CD8-positive, alpha-beta T cell (primary cell): ENCODE measurements at regions of chr20 and their contacts with region 1.

Region 1: GRCh38 chr20:35699127-35699975 is at the starts of genes NFS1 and ROMO1:
- DNase-seq: peak; percentile 68 to 93 (median 87)
- ATAC-seq: peak; percentile 88
- H3K4me3 ChIP-seq: peak within 1 kb of the TSS; percentile 94 to 98
- H3K4me3 Mint-ChIP-seq: peak within 1 kb of the TSS; percentile 92
- H3K27ac ChIP-seq: peak within 1 kb of the TSS; percentile 85 to 98
- H3K27ac Mint-ChIP-seq: peak within 1 kb of the TSS; percentile 95
- H3K4me1 ChIP-seq: peaks cover 18% of the 10 kb centered on the region
- H3K4me1 Mint-ChIP-seq: peaks cover 42% of the 10 kb centered on the region
- H3K27me3 ChIP-seq: no peaks in the 10 kb centered on the region
- H3K27me3 Mint-ChIP-seq: no peaks in the 10 kb centered on the region
- CTCF ChIP-seq: peak; percentile 21
- total RNA-seq, gene NFS1: 10.7 to 13.1 TPM
- total RNA-seq, gene ROMO1: 39.2 to 43.8 TPM

Region 2: GRCh38 chr20:35601008-35601973 is 98.1 kb before region 1 on chr20:
- CTCF ChIA-PET with region 1: interaction called, 4 read pairs
- POLR2A ChIA-PET with region 1: interaction called, 5 read pairs
- intact Hi-C with region 1: loop called (anchors 1 kb)
- DNase-seq: peak; percentile 59 to 90 (median 83)
- ATAC-seq: peak; percentile 92
- H3K4me3 ChIP-seq: peak overlapping the region; percentile 58 to 59
- H3K4me3 Mint-ChIP-seq: peak overlapping the region; percentile 82
- H3K27ac ChIP-seq: no peak overlapping the region
- H3K27ac Mint-ChIP-seq: no peak overlapping the region
- H3K4me1 ChIP-seq: peaks cover 16% of the 10 kb centered on the region
- H3K4me1 Mint-ChIP-seq: peaks cover 11% of the 10 kb centered on the region
- H3K27me3 ChIP-seq: peaks cover 5 to 8% of the 10 kb centered on the region in 2 experiments
- H3K27me3 Mint-ChIP-seq: peaks cover 14% of the 10 kb centered on the region
- CTCF ChIP-seq: peak; percentile 66

Region 3: GRCh38 chr20:35718972-35719635 is 19.8 kb after region 1 on chr20:
- CTCF ChIA-PET with region 1: interaction called, 11 read pairs
- POLR2A ChIA-PET with region 1: interaction called, 4 read pairs
- intact Hi-C with region 1: loop called (anchors 2 kb)
- DNase-seq: no peak
- ATAC-seq: no peak
- H3K4me3 ChIP-seq: no peak overlapping the region
- H3K4me3 Mint-ChIP-seq: no peak overlapping the region
- H3K27ac ChIP-seq: no peak overlapping the region
- H3K27ac Mint-ChIP-seq: peak overlapping the region; percentile 74
- H3K4me1 ChIP-seq: peaks cover 38% of the 10 kb centered on the region
- H3K4me1 Mint-ChIP-seq: peaks cover 60% of the 10 kb centered on the region
- H3K27me3 ChIP-seq: no peaks in the 10 kb centered on the region
- H3K27me3 Mint-ChIP-seq: no peaks in the 10 kb centered on the region
- CTCF ChIP-seq: no peak